Dendritic cell treated with granulocyte-macrophage colony-stimulating factor and Interleukin-4, amounts not matched to agents 40 ng/mL and 50 ng/mL, for 4 days (primary cell): ENCODE measurements at regions of chr17 and their contacts with region 1.

Region 1: GRCh38 chr17:63611354-63611753 is 10.7 kb downstream of the TACO1 start:
- H3K4me3 Mint-ChIP-seq: no peak overlapping the region
- H3K27ac Mint-ChIP-seq: no peak overlapping the region
- H3K4me1 Mint-ChIP-seq: no peaks in the 10 kb centered on the region
- H3K27me3 Mint-ChIP-seq: no peaks in the 10 kb centered on the region

Region 2: GRCh38 chr17:63478791-63479494 is 132.4 kb before region 1 on chr17:
- intact Hi-C with region 1: loop called (anchors 5 kb)
- H3K4me3 Mint-ChIP-seq: peak overlapping the region; percentile 97
- H3K27ac Mint-ChIP-seq: peak overlapping the region; percentile 78
- H3K4me1 Mint-ChIP-seq: peaks cover 80% of the 10 kb centered on the region
- H3K27me3 Mint-ChIP-seq: peaks cover 18% of the 10 kb centered on the region

Region 3: DNA sequence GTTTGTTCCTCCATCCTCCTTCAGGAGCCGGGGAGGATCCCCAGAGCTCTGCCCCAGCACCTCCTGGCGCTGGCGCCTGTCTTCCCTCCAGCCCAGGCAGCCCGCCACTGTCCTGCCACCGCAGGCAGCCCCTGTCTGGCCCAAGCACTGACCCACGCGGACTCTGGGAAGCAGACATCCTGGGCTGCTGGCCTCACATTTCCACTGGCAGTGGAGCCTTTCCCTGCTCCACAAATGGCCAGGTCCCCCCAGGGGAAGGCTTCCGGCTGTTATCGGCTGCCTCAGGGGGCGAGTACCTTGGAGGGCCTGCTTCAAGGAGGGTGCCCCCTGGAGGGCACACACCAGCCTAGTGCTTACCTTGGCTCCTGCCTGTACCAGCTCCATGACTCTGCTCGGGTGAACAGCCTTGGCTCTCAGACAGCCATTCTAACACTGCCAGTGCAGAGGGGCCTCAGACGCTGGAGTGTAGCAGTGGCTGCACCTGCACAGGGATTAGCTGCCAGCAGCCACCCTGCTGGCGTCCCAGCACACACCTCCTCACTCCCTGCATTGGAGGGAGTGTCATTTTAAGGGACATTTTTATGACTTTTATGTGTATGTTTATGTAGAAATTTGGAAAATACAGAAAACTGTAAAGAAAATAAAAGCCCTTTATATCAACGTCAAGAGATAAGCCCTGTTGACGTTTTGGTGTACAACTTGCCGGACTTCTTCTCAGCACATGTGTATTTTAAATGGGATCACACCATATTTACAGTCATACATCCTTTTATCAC is 113.5 kb before region 1 on chr17:
- intact Hi-C with region 1: no loop called
- H3K4me3 Mint-ChIP-seq: no peak overlapping the region
- H3K27ac Mint-ChIP-seq: peak overlapping the region; percentile 83
- H3K4me1 Mint-ChIP-seq: peaks cover 61% of the 10 kb centered on the region
- H3K27me3 Mint-ChIP-seq: peaks cover 5% of the 10 kb centered on the region